ENCODE measurements at regions of chr22 and their contacts with region 1.

Region 1: GRCh38 chr22:25465949-25466348 is 98.5 kb upstream of the GRK3 start:
- DNase-seq: no peak
- H3K4me3 Mint-ChIP-seq: no peak overlapping the region
- H3K27ac Mint-ChIP-seq: no peak overlapping the region
- H3K4me1 Mint-ChIP-seq: peaks cover 2% of the 10 kb centered on the region
- H3K27me3 Mint-ChIP-seq: no peaks in the 10 kb centered on the region

Region 2: GRCh38 chr22:25772288-25772687 is 306.3 kb after region 1 on chr22:
- CTCF ChIA-PET with region 1: interaction called, 18 read pairs
- intact Hi-C with region 1: loop called (anchors 1 kb)
- DNase-seq: no peak
- H3K4me3 Mint-ChIP-seq: no peak overlapping the region
- H3K27ac Mint-ChIP-seq: no peak overlapping the region
- H3K4me1 Mint-ChIP-seq: peaks cover 14% of the 10 kb centered on the region
- H3K27me3 Mint-ChIP-seq: peaks cover 2% of the 10 kb centered on the region